HCT116 (cell line): ENCODE measurements at regions of chr12 and their contacts with region 1.

Region 1: DNA sequence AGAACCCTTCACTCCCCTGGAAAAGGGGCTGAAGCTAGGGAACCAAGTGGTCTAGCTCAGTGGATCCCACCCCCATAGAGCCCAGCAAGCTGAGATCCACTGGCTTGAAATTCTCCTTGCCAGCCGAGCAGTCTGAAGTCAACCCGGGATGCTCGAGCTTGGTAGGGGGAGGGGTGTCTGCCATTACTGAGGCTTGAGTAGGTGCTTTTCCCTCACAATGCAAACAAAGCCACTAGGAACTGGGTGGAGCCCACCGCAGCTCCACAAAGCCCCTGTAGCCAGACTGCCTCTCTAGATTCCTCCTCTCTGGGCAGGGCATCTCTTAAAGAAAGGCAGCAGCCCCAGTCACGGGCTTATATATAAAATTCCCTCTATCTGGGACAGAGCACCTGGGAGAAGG is 18.9 kb downstream of the SLCO1B1 start:
- DNase-seq: no peak
- ATAC-seq: no peak
- H3K4me3 ChIP-seq: no peak overlapping the region
- H3K27ac ChIP-seq: no peak overlapping the region
- H3K4me1 ChIP-seq: no peaks in the 10 kb centered on the region
- H3K27me3 ChIP-seq: no peaks in the 10 kb centered on the region
- CTCF ChIP-seq: no peak
- POLR2A ChIP-seq: no peak
- RAD21 ChIP-seq: no peak

Region 2: GRCh38 chr12:21129906-21130305 is 19.9 kb before region 1 on chr12:
- CTCF ChIA-PET with region 1: no interaction called
- POLR2A ChIA-PET with region 1: no interaction called
- RAD21 ChIA-PET with region 1: no interaction called
- intact Hi-C with region 1: loop called (anchors 2 kb)
- DNase-seq: no peak
- ATAC-seq: no peak
- H3K4me3 ChIP-seq: no peak overlapping the region
- H3K27ac ChIP-seq: no peak overlapping the region
- H3K4me1 ChIP-seq: no peaks in the 10 kb centered on the region
- H3K27me3 ChIP-seq: no peaks in the 10 kb centered on the region
- CTCF ChIP-seq: no peak
- POLR2A ChIP-seq: no peak
- RAD21 ChIP-seq: no peak

Region 3: GRCh38 chr12:21223930-21224329 is 74.1 kb after region 1 on chr12:
- CTCF ChIA-PET with region 1: no interaction called
- POLR2A ChIA-PET with region 1: no interaction called
- RAD21 ChIA-PET with region 1: no interaction called
- intact Hi-C with region 1: no loop called
- DNase-seq: no peak
- ATAC-seq: no peak
- H3K4me3 ChIP-seq: no peak overlapping the region
- H3K27ac ChIP-seq: no peak overlapping the region
- H3K4me1 ChIP-seq: no peaks in the 10 kb centered on the region
- H3K27me3 ChIP-seq: no peaks in the 10 kb centered on the region
- CTCF ChIP-seq: no peak
- POLR2A ChIP-seq: no peak
- RAD21 ChIP-seq: no peak